Left colon (tissue), 2 donors: ENCODE measurements at regions of chr15 and their contacts with region 1.

Region 1: GRCh38 chr15:80059786-80060355 is 395 bp downstream of the ZFAND6 start:
- DNase-seq: peak in 1 of 2 donors; percentile 34
- ATAC-seq: peak; percentile 67

Region 2: DNA sequence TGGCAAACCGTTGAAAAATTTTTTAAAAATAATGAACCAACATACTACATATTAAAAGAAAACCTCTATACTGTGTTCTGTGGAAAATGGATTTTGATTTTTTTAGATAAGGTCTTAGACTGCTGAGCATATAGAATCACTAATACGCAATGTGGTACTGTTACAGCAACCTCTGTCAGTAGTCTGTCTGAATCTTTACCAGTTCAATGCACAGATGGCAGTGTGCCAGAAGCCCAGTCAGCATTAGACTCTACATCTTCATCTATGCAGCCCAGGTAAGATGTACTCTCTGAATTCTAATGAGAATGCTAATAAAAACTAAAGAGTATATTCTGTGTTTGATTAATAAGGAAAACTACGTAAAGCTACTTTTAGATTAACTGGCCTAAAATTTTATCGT is 61.7 kb after region 1 on chr15:
- intact Hi-C with region 1: no loop called
- DNase-seq: no peak
- ATAC-seq: no peak

Region 3: GRCh38 chr15:80152180-80152845 is 92.4 kb after region 1 on chr15:
- intact Hi-C with region 1: loop called in 1 of 2 experiments (anchors 10 kb)
- DNase-seq: peak; percentile 96 to 98
- ATAC-seq: peak; percentile 89

Region 4: DNA sequence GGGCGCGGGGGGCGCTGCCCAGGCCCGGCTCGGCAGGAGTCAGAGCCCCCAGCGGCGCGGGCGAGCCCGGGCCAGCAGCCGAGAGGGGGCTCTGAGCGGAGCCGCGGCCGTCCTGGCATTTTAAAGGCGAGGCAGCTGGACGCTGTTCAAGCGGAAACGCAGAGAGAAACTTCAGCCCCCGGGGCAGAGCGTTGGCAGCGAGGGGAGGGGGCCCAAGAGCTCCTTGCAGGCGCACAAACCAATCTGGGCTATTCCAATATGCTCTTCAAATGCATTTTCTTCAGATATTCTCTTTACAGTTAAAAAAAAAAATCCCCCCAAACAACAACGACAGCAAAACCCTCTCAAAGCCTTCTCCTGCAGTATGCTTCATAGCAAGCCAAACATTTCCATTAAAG is 192.2 kb after region 1 on chr15 and contains the start of gene CTXND1:
- intact Hi-C with region 1: no loop called
- DNase-seq: peak in 1 of 2 donors; percentile 5
- ATAC-seq: no peak
- total RNA-seq, gene CTXND1: 0.15 to 0.42 TPM